ENCODE measurements at regions of chr14 and their contacts with region 1.

Region 1: DNA sequence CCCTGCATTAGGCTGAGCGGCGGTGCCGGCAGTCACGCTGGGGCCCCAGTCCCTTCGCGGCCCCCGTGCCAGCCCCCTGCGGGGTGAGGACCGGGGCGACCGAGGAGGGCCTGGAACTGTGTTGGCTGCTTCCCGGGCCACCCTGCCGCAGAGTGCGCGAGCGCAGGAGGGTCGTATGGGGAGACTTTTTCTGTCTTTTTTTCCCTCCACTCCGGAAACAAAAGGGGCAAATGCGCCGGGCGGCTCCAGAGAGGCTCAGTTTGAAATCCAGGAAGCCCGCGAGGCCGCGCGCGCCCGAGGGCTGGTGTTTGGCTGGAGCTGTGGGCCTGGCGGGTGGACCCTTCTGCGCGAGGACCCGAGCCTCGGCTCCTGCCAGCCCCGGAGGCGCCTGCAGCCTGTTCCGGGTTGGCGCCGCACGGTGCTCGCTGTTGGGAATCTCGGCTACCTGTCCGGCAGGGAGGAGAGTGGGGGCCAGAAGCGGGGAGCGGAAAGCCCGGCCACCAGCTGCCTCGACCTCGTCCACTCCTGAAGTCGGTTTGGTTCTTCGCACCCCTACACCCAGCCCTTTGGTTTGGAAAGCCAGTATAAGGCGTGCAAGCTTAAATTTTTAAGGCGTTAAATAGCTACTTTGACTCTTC is 638 bp downstream of the PLEKHG3 start:
- DNase-seq: peak in 1 of 2 donors; percentile 37
- ATAC-seq: peak; percentile 28 to 41 (median 34)
- H3K4me3 ChIP-seq: peak overlapping the region; percentile 89
- H3K27ac ChIP-seq: peak overlapping the region; percentile 74
- H3K4me1 ChIP-seq: no peaks in the 10 kb centered on the region
- H3K27me3 ChIP-seq: peaks cover 0 to 21% (median 0%) of the 10 kb centered on the region in 3 donors
- CTCF ChIP-seq: no peak

Region 2: DNA sequence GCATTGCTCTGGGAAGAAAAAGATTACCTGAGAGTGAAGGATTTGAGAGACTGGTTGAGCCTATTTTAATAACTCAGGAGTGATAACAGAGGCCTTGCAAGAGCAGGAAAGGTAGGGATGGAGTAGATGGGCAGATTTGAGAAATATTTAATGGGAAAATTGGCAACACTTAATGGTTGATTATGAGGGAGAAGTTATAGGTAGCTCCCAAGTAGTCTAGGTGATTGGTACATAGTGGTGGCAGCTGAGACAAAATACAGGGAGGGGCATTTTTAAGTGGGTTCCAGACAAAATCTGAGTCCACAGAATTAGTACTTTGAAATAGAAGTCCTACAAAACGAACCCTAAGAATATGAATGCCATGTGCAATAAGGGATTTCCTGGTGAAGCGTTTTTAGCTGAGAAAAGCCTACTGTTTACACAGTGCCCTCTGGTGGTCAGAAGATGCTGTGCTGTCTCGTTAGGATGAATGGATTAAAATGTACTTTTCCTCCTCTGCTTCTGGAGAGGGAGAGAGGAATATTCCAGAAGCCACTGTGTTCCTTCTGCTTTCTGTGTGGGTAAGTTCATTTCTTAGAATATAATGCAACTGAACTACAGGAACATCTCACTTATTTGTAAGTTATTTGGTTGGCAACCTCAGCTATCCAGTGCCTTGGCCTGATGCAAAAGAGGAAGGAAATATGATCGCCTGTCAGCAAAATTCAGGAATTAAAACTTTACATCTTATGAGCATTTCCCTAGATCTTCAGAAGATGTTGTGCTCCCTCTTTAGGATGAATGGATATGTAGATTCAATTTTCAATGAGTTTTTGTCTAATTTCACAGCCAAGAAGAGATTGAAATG is 193.8 kb before region 1 on chr14:
- intact Hi-C with region 1: no loop called
- DNase-seq: peak in 1 of 2 donors; percentile 43
- ATAC-seq: peak; percentile 58 to 76 (median 70)
- H3K4me3 ChIP-seq: no peak overlapping the region
- H3K27ac ChIP-seq: peak overlapping the region; percentile 48
- H3K4me1 ChIP-seq: peaks cover 57% of the 10 kb centered on the region
- H3K27me3 ChIP-seq: no peaks in the 10 kb centered on the region
- CTCF ChIP-seq: peak; percentile 91

Region 3: GRCh38 chr14:64715628-64716412 is 11.0 kb after region 1 on chr14:
- intact Hi-C with region 1: loop called in 1 of 2 experiments (anchors 1 kb)
- DNase-seq: no peak
- ATAC-seq: peak in 3 of 4 donors; percentile 26 to 57 (median 33)
- H3K4me3 ChIP-seq: peak overlapping the region; percentile 53
- H3K27ac ChIP-seq: no peak overlapping the region
- H3K4me1 ChIP-seq: peaks cover 15% of the 10 kb centered on the region
- H3K27me3 ChIP-seq: no peaks in the 10 kb centered on the region
- CTCF ChIP-seq: no peak